Gastrocnemius medialis (tissue), 4 donors: ENCODE measurements at regions of chr22 and their contacts with region 1.

Region 1: DNA sequence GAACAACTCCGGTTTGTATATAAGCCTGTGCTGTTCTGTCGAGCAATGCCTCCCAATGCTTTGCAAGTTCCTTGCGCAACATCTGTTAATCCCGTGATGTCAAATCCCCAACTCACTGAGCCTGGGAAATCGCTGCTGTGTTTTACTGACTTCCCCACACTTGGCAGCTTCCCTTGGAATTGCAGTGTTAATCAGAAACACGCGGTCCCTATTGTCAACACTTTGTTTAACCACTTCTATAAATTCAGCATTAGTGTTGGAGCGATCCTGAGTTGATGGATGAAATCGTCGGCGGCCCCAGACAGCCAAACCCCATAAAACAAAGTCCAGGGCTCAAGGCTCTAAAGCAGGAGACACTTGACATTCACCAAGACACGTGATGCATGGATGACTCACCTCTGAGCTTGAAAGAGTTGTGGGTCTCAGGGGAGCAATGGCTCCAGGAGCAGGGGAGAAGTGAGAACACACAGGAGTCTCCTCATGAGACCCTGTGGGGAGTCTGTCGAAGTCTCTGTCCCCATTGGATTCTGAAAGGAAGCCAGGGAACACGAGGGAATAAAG is 555.3 kb downstream of the MIAT start:
- DNase-seq: peak; percentile 71 to 73
- ATAC-seq: peak; percentile 64 to 68
- H3K4me3 ChIP-seq: no peak overlapping the region
- H3K27ac ChIP-seq: peak overlapping the region; percentile 45 to 75 (median 58)
- H3K4me1 ChIP-seq: no peaks in the 10 kb centered on the region
- H3K27me3 ChIP-seq: peaks cover 0 to 7% (median 5%) of the 10 kb centered on the region in 3 donors
- CTCF ChIP-seq: no peak
- POLR2A ChIP-seq: no peak

Region 2: DNA sequence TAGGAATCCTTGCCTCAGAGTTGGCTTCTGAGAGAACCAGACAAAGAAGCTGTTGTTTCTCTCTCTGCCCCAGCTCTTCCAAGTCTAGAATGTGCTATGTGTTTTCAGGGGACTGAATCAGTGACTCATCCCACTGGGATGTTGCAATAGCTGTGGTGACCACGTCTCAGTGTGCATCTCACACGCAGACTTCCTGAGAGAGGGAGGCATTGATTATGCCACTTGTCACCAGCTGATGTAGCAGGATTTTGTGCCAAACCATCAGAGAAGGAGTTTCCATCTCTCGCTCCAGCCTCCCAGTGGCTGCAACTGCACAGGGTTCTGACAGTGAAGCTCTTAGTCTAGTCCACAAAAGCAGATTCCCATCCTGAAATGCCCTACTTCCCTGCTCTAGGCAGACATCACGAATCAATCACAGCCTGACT is 99.5 kb before region 1 on chr22:
- in situ Hi-C with region 1: no loop called
- intact Hi-C with region 1: loop called (anchors 10 kb)
- DNase-seq: peak; percentile 53 to 71
- ATAC-seq: peak; percentile 79 to 86
- H3K4me3 ChIP-seq: no peak overlapping the region
- H3K27ac ChIP-seq: peak overlapping the region in 3 of 4 donors; percentile 27 to 46 (median 29)
- H3K4me1 ChIP-seq: peaks cover 0 to 4% of the 10 kb centered on the region in 2 donors
- H3K27me3 ChIP-seq: peaks cover 0 to 20% (median 3%) of the 10 kb centered on the region in 3 donors
- CTCF ChIP-seq: no peak
- POLR2A ChIP-seq: peak in 1 of 2 donors; percentile 9

Region 3: DNA sequence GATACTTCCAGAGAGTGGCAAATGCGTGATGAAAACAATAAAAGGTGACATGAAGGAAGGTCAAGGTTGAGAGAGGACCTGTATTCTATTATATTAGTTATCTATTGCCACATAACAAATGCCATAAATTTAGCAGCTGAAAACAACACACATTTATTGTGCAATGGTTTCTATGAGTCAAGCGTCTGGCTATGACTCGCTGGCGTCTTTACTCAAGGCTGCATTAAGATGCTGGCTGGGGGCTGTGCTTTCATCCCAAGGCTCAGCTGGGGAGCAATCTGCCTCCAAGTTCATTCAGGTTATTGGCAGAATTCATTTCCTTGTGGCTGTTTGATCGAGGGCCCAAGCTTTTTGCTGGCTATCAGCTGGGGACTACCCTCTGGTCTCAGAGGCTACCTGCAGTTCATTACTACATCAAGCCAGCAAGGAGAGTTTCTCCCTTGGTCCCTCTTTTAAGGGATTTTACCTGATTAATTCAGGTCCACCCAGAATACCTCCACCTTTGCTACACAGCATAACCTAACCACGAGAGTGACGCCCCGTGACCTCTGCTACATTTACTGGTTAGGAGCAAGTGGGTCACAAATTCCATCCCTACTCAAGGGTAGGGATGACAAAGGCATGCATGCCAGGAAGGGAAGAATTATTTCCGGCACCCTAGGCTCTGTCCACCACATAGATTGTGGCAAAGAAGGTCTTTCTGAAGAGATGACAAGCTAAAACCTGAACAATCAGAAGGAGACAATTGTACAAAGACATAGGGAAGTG is 39.8 kb after region 1 on chr22:
- in situ Hi-C with region 1: no loop called
- intact Hi-C with region 1: loop called (anchors 5 kb)
- DNase-seq: peak; percentile 5 to 58
- ATAC-seq: peak in 1 of 2 donors; percentile 58
- H3K4me3 ChIP-seq: no peak overlapping the region
- H3K27ac ChIP-seq: no peak overlapping the region
- H3K4me1 ChIP-seq: no peaks in the 10 kb centered on the region
- H3K27me3 ChIP-seq: no peaks in the 10 kb centered on the region
- CTCF ChIP-seq: no peak
- POLR2A ChIP-seq: no peak